ENCODE measurements at regions of chr1 and their contacts with region 1.

Region 1: DNA sequence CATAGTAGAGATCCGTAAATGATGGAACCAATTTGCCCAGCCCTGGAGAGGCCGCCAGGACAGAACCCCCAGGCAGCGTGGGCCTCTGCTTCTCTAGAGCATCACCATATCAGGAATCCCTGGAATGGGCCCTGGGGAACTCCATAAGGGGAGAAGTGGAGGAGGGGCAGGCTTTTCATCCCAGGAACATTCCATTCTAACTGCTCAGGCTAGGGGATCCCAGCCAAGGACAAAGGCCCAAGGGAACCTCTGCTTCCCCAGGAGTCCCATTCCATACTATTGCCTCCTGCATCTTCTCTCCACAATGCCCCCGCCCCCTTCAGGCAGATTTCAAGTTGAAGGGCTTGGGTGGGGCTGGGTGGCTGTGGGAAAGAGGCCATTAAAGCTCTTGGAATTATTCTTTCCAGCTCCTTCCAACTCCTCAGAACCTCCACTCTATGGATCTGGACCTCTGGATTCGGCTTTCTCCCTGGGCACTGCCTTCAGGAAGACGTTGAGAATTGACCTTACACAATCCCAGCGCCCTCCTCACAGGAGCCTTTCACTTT is 6.0 kb downstream of the TRNP1 start:
- DNase-seq: peak; percentile 61 to 63
- ATAC-seq: peak; percentile 75 to 80
- H3K4me3 ChIP-seq: no peak overlapping the region
- H3K27ac ChIP-seq: peak overlapping the region; percentile 52 to 72 (median 60)
- H3K4me1 ChIP-seq: peaks cover 19 to 23% of the 10 kb centered on the region in 2 donors
- H3K27me3 ChIP-seq: peaks cover 8 to 17% (median 14%) of the 10 kb centered on the region in 3 donors
- CTCF ChIP-seq: no peak
- POLR2A ChIP-seq: no peak

Region 2: GRCh38 chr1:27031235-27032118 is 32.0 kb after region 1 on chr1:
- in situ Hi-C with region 1: no loop called
- intact Hi-C with region 1: loop called (anchors 5 kb)
- DNase-seq: peak; percentile 6 to 37
- ATAC-seq: peak; percentile 51 to 58
- H3K4me3 ChIP-seq: peak overlapping the region; percentile 36 to 48 (median 44)
- H3K27ac ChIP-seq: peak overlapping the region in 3 of 4 donors; percentile 36 to 51 (median 45)
- H3K4me1 ChIP-seq: peaks cover 4 to 8% of the 10 kb centered on the region in 2 donors
- H3K27me3 ChIP-seq: peaks cover 0 to 2% (median 0%) of the 10 kb centered on the region in 3 donors
- CTCF ChIP-seq: no peak
- POLR2A ChIP-seq: no peak